ENCODE measurements at regions of chr10 and their contacts with region 1.

Region 1: DNA sequence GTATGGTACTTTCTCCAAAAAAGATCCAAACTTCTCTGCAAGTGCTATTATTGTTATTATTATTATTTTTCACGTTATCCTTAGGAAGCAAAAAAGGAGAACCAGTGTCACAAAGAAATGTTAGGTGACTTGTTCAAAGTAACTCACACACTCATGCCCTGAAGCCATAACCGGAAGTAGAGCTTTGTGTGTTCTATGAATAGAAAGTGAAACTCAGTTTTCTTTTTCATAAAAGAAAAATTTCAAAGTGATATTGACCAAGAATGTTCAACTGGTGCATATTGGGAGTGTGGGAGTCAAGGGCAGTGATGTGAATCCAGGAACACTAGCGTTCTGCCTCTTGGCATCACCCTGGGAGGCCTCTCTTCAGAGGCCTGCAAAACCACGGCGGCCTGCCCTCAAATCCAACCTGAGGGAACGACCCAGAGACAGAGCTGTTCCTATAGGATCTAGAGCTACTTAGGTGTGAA is 106.1 kb downstream of the PRKCQ start:
- DNase-seq: peak; percentile 44
- H3K4me3 Mint-ChIP-seq: peak overlapping the region; percentile 86
- H3K27ac Mint-ChIP-seq: peak overlapping the region; percentile 97
- H3K4me1 Mint-ChIP-seq: peaks cover 89% of the 10 kb centered on the region
- H3K27me3 Mint-ChIP-seq: no peaks in the 10 kb centered on the region

Region 2: DNA sequence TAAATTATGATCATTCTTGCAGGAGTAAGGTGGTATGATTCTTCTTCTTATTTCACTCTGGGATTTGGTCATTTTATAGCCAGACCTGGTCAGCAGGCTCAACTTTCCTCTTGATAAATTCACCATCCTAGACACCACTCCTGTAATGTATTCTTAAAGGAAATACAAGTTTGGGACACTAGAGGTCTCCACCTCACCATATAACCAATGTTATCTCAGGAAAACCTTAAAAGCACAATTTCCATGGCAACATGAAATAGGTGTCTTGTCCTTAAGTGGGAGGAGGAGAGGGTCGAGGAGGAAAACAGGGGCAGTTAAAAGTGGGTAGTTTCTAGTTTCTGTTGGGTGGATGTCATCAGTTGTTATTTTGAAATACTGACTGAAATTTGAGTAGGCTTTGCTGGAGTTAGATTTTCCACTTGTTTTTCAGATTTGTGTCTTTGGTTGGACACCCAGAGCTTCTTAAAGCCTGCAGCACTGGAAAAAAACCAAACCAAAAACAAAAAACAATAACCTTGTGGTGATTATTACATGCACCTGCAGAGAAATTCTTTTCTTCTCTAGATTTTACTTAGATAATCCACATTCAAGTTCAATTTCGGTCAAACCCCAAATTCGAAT is 56.9 kb before region 1 on chr10:
- intact Hi-C with region 1: loop called (anchors 2 kb)
- DNase-seq: no peak
- H3K4me3 Mint-ChIP-seq: no peak overlapping the region
- H3K27ac Mint-ChIP-seq: no peak overlapping the region
- H3K4me1 Mint-ChIP-seq: peaks cover 8% of the 10 kb centered on the region
- H3K27me3 Mint-ChIP-seq: peaks cover 1% of the 10 kb centered on the region

Region 3: GRCh38 chr10:6498771-6499170 is 24.8 kb after region 1 on chr10:
- intact Hi-C with region 1: loop called (anchors 1 kb)
- DNase-seq: peak; percentile 63
- H3K4me3 Mint-ChIP-seq: peak overlapping the region; percentile 68
- H3K27ac Mint-ChIP-seq: peak overlapping the region; percentile 88
- H3K4me1 Mint-ChIP-seq: peaks cover 44% of the 10 kb centered on the region
- H3K27me3 Mint-ChIP-seq: no peaks in the 10 kb centered on the region

Region 4: GRCh38 chr10:6530211-6530840 is 56.4 kb after region 1 on chr10:
- intact Hi-C with region 1: loop called (anchors 1 kb)
- DNase-seq: peak; percentile 78
- H3K4me3 Mint-ChIP-seq: peak overlapping the region; percentile 80
- H3K27ac Mint-ChIP-seq: peak overlapping the region; percentile 99
- H3K4me1 Mint-ChIP-seq: peaks cover 75% of the 10 kb centered on the region
- H3K27me3 Mint-ChIP-seq: no peaks in the 10 kb centered on the region

Region 5: GRCh38 chr10:6635784-6636183 is 161.8 kb after region 1 on chr10:
- intact Hi-C with region 1: no loop called
- DNase-seq: no peak
- H3K4me3 Mint-ChIP-seq: no peak overlapping the region
- H3K27ac Mint-ChIP-seq: peak overlapping the region; percentile 21
- H3K4me1 Mint-ChIP-seq: peaks cover 52% of the 10 kb centered on the region
- H3K27me3 Mint-ChIP-seq: peaks cover 2% of the 10 kb centered on the region

Region 6: GRCh38 chr10:6647811-6648526 is 174.0 kb after region 1 on chr10:
- intact Hi-C with region 1: loop called (anchors 2 kb)
- DNase-seq: peak; percentile 58
- H3K4me3 Mint-ChIP-seq: no peak overlapping the region
- H3K27ac Mint-ChIP-seq: no peak overlapping the region
- H3K4me1 Mint-ChIP-seq: peaks cover 51% of the 10 kb centered on the region
- H3K27me3 Mint-ChIP-seq: no peaks in the 10 kb centered on the region